Activated CD4-positive, alpha-beta T cell treated with anti-CD3 and anti-CD28 coated beads for 36 hours (primary cell): ENCODE measurements at regions of chr7 and their contacts with region 1.

Region 1: GRCh38 chr7:75072978-75073282 is 672 bp downstream of the RCC1L start:
- DNase-seq: no peak
- ATAC-seq: peak; percentile 4
- H3K4me3 Mint-ChIP-seq: peak overlapping the region; percentile 95
- H3K27ac Mint-ChIP-seq: peak overlapping the region; percentile 90
- H3K4me1 Mint-ChIP-seq: peaks cover 11% of the 10 kb centered on the region
- H3K27me3 Mint-ChIP-seq: no peaks in the 10 kb centered on the region

Region 2: GRCh38 chr7:75531359-75531821 is 458.5 kb after region 1 on chr7:
- CTCF ChIA-PET with region 1: no interaction called
- POLR2A ChIA-PET with region 1: no interaction called
- intact Hi-C with region 1: loop called in 1 of 2 experiments (anchors 10 kb)
- DNase-seq: no peak
- ATAC-seq: no peak
- H3K4me3 Mint-ChIP-seq: no peak overlapping the region
- H3K27ac Mint-ChIP-seq: no peak overlapping the region
- H3K4me1 Mint-ChIP-seq: peaks cover 18% of the 10 kb centered on the region
- H3K27me3 Mint-ChIP-seq: no peaks in the 10 kb centered on the region